Head of caudate nucleus (tissue), 42 donors: ENCODE measurements at regions of chr2 and their contacts with region 1.

Region 1: DNA sequence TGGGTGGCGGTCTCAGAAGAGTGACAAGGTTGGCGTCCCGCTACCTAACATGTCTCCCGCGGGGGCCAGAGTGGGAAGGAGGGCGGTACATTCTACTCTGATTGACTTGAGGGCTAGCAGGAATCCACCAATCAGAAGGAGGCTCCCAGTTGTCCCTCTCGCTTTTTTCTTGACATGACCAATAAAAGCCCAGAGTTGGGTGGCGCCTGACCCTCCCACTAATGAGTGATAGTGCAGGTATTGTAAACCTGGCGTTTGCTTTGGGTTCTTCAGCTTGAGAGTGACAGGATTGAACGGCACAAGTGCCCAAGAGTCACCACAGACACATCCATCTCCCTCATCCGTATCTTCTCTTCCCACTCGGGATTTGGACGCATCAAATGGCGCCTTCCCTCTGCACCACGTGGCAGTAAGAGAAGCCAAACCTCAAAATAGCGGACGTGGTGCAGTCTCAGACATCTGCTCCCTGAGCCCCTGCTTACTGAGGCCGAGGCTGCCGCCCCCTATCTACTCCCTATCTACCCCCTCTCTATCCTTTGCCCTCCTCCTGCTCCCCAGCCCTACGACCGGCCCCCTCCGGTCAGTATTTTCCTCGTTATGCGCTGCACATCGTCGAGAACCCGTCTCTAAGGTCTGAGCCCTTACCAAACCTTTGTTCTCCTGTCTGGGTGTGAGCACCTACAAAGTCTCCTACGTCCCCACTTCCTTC is 768 bp upstream of the FAM161A start:
- DNase-seq: peak; percentile 80 to 99 (median 94)

Region 2: DNA sequence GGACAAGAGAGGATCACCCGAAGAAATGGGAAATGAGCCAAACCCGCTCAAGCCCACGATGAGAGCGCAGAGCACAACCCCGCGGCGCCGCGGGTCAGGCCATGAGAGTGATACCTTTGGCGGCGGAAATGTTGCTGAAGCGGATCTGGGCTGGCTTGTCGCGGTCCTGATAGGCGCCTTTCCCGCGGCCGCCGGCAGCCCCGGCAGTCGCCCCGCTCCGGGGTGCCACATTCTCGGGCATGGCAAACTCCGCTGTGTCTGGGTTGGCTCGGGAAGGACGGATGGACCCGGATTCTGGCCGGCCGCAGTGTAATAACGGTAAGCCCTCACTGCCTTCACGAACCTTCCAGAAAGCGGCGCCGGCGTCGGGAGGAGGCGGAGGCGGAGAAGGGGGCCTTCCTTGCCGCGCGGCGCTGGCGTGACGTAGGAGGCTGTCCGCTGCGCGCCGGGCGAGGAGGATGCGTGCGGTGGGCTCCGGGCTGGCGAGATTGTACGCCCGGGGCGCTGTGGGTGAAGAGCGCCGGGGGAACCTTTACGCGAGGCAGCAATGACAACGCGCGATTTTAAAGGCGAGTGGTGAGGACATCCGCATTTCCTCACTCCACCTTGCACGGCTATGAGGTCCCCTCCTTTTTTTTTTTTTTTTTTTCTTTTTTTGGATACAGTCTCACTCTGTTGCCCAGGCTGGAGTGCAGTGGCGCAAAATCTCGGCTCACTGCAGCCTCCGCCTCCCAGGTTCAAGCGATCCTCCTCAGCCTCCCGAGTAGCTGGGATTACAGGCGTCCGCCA is 33.8 kb after region 1 on chr2 and contains the start of gene CCT4:
- intact Hi-C with region 1: loop called (anchors 2 kb)
- DNase-seq: peak; percentile 73 to 97 (median 91)